A673 (cell line): ENCODE measurements at regions of chr3 and their contacts with region 1.

Region 1: GRCh38 chr3:72473156-72473555 is 375.1 kb downstream of the SHQ1 start:
- DNase-seq: no peak
- H3K4me3 ChIP-seq: no peak overlapping the region
- H3K27ac ChIP-seq: no peak overlapping the region
- H3K4me1 ChIP-seq: no peaks in the 10 kb centered on the region
- H3K27me3 ChIP-seq: no peaks in the 10 kb centered on the region
- CTCF ChIP-seq: no peak

Region 2: GRCh38 chr3:71885006-71885405 is 588.1 kb before region 1 on chr3:
- CTCF ChIA-PET with region 1: interaction called, 11 read pairs
- POLR2A ChIA-PET with region 1: no interaction called
- intact Hi-C with region 1: no loop called
- DNase-seq: no peak
- H3K4me3 ChIP-seq: no peak overlapping the region
- H3K27ac ChIP-seq: no peak overlapping the region
- H3K4me1 ChIP-seq: no peaks in the 10 kb centered on the region
- H3K27me3 ChIP-seq: no peaks in the 10 kb centered on the region
- CTCF ChIP-seq: no peak